ENCODE measurements at regions of chr5 and their contacts with region 1.

Region 1: DNA sequence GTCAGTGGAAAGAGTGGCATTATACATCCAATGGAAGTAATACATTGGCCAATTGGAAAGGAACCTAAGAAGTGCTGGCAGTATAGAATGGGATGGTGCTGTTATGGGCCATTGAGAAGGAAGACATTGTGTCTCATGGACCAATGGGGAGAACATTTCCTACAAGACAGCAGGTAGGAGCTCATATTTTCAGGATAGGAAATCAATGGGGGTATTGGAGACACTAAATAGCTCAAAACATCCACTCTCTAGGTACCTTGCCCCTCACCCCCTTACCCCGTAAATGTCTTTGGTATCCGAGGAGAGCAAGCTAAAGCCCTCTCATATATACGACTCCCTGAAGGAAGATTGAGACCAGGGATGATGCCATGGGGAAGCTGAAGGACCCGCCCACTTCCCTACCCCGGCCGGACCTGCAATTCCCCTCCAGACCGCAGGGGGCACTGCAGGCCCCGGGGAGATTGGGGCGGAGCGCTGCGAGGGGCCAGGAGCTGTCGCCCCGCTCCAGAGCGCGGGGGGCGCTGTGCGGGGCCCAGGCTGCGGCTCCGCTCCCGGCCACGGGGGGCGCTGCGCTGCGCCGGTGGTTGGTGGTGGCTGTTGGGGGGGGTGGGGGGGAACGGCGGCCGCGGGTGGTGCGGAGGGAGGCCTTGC is at the start of gene KDM3B:
- DNase-seq: peak; percentile 94
- H3K4me3 ChIP-seq: peak within 1 kb of the TSS; percentile 73
- H3K27ac ChIP-seq: peak within 1 kb of the TSS; percentile 89
- H3K4me1 ChIP-seq: peaks cover 14% of the 10 kb centered on the region
- H3K27me3 ChIP-seq: no peaks in the 10 kb centered on the region
- CTCF ChIP-seq: peak; percentile 99
- total RNA-seq, gene KDM3B: 62.1 and 65.1 TPM in 2 replicates

Region 2: GRCh38 chr5:137923856-137924255 is 428.3 kb before region 1 on chr5:
- CTCF ChIA-PET with region 1: no interaction called
- POLR2A ChIA-PET with region 1: no interaction called
- intact Hi-C with region 1: no loop called
- DNase-seq: peak; percentile 4
- H3K4me3 ChIP-seq: no peak overlapping the region
- H3K27ac ChIP-seq: no peak overlapping the region
- H3K4me1 ChIP-seq: no peaks in the 10 kb centered on the region
- H3K27me3 ChIP-seq: no peaks in the 10 kb centered on the region
- CTCF ChIP-seq: 0 out of 2 replicates have a peak, but pooled peaks have one; percentile 17

Region 3: GRCh38 chr5:138331449-138332368 is 20.5 kb before region 1 on chr5 and contains the start of gene CDC25C:
- CTCF ChIA-PET with region 1: interaction called, 13 read pairs
- POLR2A ChIA-PET with region 1: no interaction called
- intact Hi-C with region 1: no loop called
- DNase-seq: peak; percentile 100
- H3K4me3 ChIP-seq: peak within 1 kb of the TSS; percentile 80
- H3K27ac ChIP-seq: peak within 1 kb of the TSS; percentile 74
- H3K4me1 ChIP-seq: no peaks in the 10 kb centered on the region
- H3K27me3 ChIP-seq: no peaks in the 10 kb centered on the region
- CTCF ChIP-seq: no peak
- total RNA-seq, gene CDC25C: 22.3 and 25.6 TPM in 2 replicates

Region 4: GRCh38 chr5:138337685-138338410 is 14.3 kb before region 1 on chr5 and contains the start of gene FAM53C:
- CTCF ChIA-PET with region 1: interaction called, 8 read pairs
- POLR2A ChIA-PET with region 1: interaction called, 22 read pairs
- intact Hi-C with region 1: no loop called
- DNase-seq: peak; percentile 94
- H3K4me3 ChIP-seq: peak within 1 kb of the TSS; percentile 76
- H3K27ac ChIP-seq: peak within 1 kb of the TSS; percentile 100
- H3K4me1 ChIP-seq: peaks cover 6% of the 10 kb centered on the region
- H3K27me3 ChIP-seq: no peaks in the 10 kb centered on the region
- CTCF ChIP-seq: no peak
- total RNA-seq, gene FAM53C: 39.7 and 39.8 TPM in 2 replicates

Region 5: GRCh38 chr5:138386290-138386689 is 34.1 kb after region 1 on chr5:
- CTCF ChIA-PET with region 1: interaction called, 15 read pairs
- POLR2A ChIA-PET with region 1: no interaction called
- intact Hi-C with region 1: no loop called
- DNase-seq: no peak
- H3K4me3 ChIP-seq: no peak overlapping the region
- H3K27ac ChIP-seq: no peak overlapping the region
- H3K4me1 ChIP-seq: no peaks in the 10 kb centered on the region
- H3K27me3 ChIP-seq: no peaks in the 10 kb centered on the region
- CTCF ChIP-seq: no peak

Region 6: GRCh38 chr5:139061274-139061673 is 709.1 kb after region 1 on chr5:
- CTCF ChIA-PET with region 1: no interaction called
- POLR2A ChIA-PET with region 1: no interaction called
- intact Hi-C with region 1: no loop called
- DNase-seq: no peak
- H3K4me3 ChIP-seq: no peak overlapping the region
- H3K27ac ChIP-seq: no peak overlapping the region
- H3K4me1 ChIP-seq: peaks cover 14% of the 10 kb centered on the region
- H3K27me3 ChIP-seq: no peaks in the 10 kb centered on the region
- CTCF ChIP-seq: no peak